ENCODE measurements at regions of chr2 and their contacts with region 1.

Region 1: DNA sequence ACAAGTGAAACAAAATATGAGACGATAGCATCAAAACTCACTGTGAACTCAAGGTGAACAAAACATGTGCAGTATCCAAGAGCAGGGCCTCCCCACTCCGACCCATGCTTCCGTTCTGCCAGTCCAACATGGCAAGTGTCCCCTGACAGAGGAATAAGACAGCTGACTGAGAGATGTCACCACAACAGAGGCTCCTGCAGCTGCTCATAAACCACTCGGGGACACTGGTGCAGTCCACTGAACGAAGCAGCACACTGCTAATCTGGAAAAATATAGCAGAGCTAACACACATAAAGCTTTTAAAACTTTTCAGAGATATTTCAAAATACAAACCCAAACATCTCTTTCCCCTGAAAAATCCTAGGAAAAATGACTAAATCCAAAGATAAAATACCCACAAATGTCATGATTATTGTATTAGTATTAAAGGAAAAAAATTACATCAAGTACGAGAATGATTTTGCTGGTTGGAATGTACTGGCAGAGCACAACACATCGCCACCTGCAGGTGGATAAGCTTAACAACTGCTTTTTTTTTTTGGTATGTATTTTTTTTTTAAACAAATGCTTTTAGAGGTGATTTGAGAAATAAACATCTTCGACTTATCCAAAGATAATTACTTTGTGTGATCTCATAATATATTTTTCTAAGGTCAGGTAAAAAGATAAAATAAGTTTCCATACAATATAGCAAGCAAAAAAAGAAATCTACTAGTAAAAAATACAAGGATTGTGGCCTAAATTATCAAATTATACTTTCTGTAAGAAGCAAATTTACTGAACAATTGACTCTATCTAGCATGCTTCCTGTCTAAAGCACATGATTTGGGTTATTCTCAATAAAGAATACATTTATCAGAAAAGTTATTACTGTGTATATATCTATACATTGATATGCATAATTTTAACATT is 18.6 kb downstream of the THADA start:
- DNase-seq: peak; percentile 61
- H3K4me3 ChIP-seq: no peak overlapping the region
- H3K27ac ChIP-seq: no peak overlapping the region
- H3K4me1 ChIP-seq: no peaks in the 10 kb centered on the region
- H3K27me3 ChIP-seq: no peaks in the 10 kb centered on the region
- CTCF ChIP-seq: peak; percentile 60 to 66
- POLR2A ChIP-seq: no peak

Region 2: GRCh38 chr2:42828487-42829425 is 748.5 kb before region 1 on chr2:
- CTCF ChIA-PET with region 1: interaction called, 29 read pairs
- POLR2A ChIA-PET with region 1: no interaction called
- dilution Hi-C with region 1: no loop called
- intact Hi-C with region 1: loop called (anchors 1 kb)
- DNase-seq: peak; percentile 66
- H3K4me3 ChIP-seq: no peak overlapping the region
- H3K27ac ChIP-seq: no peak overlapping the region
- H3K4me1 ChIP-seq: no peaks in the 10 kb centered on the region
- H3K27me3 ChIP-seq: no peaks in the 10 kb centered on the region
- CTCF ChIP-seq: peak; percentile 91 to 93
- POLR2A ChIP-seq: no peak

Region 3: DNA sequence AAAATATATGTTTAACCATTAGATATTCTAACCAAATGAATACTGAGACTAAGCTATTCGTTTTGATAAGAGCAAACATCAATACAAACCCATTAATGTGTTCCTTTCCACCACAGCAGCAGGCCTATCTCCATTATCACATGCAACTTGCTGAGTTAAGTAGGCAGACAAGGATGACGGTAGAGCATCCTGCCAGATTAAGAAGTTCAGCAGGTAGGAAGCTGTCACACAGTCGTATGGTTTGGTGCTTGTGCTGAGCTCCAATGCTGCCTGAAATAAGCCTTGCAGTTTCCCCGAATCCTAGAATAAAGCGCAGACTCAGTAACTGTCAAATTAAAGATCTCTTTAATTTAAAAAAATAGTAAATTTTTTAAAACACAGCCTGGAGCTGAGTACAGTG is 21.0 kb before region 1 on chr2:
- CTCF ChIA-PET with region 1: interaction called, 18 read pairs
- POLR2A ChIA-PET with region 1: no interaction called
- dilution Hi-C with region 1: no loop called
- intact Hi-C with region 1: no loop called
- DNase-seq: no peak
- H3K4me3 ChIP-seq: no peak overlapping the region
- H3K27ac ChIP-seq: no peak overlapping the region
- H3K4me1 ChIP-seq: no peaks in the 10 kb centered on the region
- H3K27me3 ChIP-seq: no peaks in the 10 kb centered on the region
- CTCF ChIP-seq: no peak
- POLR2A ChIP-seq: no peak

Region 4: DNA sequence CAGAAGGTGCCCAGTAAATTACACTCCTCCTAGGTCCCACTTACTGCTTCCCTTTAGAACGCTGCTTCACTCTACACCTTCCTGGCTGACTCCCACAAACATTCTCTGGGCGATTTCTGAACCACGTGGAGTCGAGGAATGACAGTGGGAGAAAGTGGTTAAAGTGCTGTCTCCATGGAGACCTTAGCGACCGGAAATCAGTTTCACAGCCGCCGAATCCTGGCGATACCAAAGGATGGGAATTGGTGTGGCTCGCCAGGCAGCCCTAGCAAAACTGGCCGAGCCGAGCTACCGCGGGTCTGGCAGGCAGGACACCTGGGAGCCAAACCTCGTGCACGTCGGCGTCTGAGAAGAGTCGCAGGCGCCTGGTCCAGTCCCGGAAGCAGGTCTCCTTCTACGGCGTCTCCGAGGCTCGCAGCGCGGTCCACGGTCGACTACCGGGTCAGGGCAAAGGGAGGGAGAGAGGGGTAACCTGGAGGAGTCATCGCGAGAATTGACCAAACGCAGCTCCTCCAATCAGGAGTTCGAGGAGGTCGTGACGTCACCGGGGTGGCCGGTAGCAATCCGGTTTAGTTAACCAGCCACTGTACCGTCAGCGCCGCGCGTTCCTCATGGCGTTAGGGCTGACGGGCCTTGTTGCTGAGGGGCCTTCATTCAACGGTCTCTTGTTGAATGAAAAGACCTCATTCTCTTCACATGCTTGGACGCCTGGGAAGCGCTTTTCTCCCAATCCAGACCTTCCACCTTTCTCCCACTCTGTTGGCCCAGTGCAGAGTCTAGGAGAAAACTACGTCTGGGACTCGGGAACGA is 18.6 kb after region 1 on chr2 and contains the start of gene THADA:
- CTCF ChIA-PET with region 1: interaction called, 16 read pairs
- POLR2A ChIA-PET with region 1: interaction called, 6 read pairs
- dilution Hi-C with region 1: no loop called
- intact Hi-C with region 1: no loop called
- DNase-seq: peak; percentile 99
- H3K4me3 ChIP-seq: peak within 1 kb of the TSS; percentile 46 to 82 (median 75)
- H3K27ac ChIP-seq: peak within 1 kb of the TSS; percentile 86
- H3K4me1 ChIP-seq: peaks cover 14% of the 10 kb centered on the region
- H3K27me3 ChIP-seq: peaks cover 0 to 7% of the 10 kb centered on the region in 2 experiments
- CTCF ChIP-seq: no peak
- POLR2A ChIP-seq: peak; percentile 98
- total RNA-seq, gene THADA: 23.7 and 25.3 TPM in 2 replicates

Region 5: DNA sequence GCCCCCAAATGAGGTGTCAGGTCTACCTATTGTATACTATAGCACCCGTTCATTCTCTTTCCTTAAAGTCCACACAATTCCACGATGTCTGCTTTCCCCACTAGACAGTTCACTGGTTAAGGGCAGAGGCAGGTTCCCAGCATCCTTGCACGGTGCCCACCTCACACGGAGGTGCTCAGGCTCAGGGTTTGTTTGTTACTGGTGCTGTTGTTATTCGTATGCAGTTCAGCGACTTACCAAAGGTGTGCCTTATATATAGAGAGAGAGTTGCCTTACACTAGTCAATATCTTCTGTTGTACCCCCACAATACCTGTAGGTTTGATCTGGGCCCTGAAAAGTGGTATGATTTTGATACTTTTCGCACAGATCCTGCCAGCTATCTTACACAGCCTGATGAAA is 728.6 kb after region 1 on chr2:
- CTCF ChIA-PET with region 1: no interaction called
- POLR2A ChIA-PET with region 1: interaction called, 11 read pairs
- dilution Hi-C with region 1: no loop called
- intact Hi-C with region 1: no loop called
- DNase-seq: no peak
- H3K4me3 ChIP-seq: no peak overlapping the region
- H3K27ac ChIP-seq: no peak overlapping the region
- H3K4me1 ChIP-seq: no peaks in the 10 kb centered on the region
- H3K27me3 ChIP-seq: peaks cover 0 to 2% of the 10 kb centered on the region in 2 experiments
- CTCF ChIP-seq: no peak
- POLR2A ChIP-seq: no peak

Measured in endothelial cell of umbilical vein (primary cell).